Activated CD8-positive, alpha-beta T cell treated with anti-CD3 and anti-CD28 coated beads for 36 hours (primary cell): ENCODE measurements at regions of chr19 and their contacts with region 1.

Region 1: DNA sequence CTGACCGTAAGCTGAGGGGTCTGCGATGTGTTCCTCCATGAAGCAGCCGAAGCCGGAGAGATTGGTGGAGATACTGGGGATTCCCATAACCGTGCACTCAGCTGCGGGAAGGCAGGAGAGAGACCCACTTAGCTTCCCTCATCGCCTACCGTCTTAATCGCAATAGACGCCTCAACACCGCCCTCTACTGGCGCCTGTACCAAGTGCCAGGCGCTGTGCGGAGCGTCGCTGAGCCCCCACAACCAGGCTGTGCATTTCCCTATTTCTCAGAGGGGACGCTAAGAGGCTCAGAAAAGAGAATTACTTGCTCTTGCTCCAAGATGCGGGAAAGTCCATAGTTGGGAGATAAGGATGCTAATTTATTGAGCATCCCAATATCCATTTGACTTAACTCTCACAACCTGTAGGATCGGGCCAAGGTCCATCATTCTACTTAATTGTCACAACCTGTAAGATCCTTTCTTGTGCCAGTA is 5.8 kb downstream of the FTL start:
- DNase-seq: peak; percentile 93
- ATAC-seq: peak; percentile 83
- H3K4me3 Mint-ChIP-seq: no peak overlapping the region
- H3K27ac Mint-ChIP-seq: peak overlapping the region; percentile 46
- H3K4me1 Mint-ChIP-seq: peaks cover 20% of the 10 kb centered on the region
- H3K27me3 Mint-ChIP-seq: no peaks in the 10 kb centered on the region
- CTCF ChIP-seq: peak; percentile 95

Region 2: DNA sequence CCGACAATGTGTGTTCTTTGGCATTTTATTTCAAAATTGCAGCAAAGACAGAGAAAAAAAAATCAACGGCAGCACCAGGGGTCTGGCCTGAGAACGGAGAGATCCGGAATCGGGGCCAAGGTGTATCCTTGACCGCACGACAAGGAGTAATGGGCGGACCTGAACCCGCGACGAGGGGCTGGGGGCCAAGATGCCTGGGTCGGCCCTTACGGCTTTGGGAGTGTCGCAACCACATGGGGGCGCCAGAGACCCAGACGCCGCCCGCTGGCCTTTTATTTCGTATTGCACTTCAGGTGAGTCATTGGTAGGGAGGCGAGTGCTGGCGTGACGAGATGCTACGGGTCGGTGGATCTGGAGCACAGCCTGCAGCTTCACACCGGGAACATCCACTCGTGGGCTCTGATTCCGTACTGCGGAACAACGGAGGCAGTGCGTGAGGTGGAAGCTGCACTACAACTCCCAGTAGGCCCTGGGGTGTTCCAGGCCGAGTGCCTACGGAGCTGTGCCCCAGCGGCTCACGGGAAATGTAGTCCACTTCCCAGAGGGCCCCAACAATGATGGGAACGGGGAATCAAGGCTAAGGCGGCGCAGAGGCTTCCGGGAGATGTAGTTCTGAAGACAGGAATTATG is 175.8 kb before region 1 on chr19:
- CTCF ChIA-PET with region 1: interaction called, 12 read pairs
- POLR2A ChIA-PET with region 1: interaction called, 7 read pairs
- intact Hi-C with region 1: loop called (anchors 5 kb)
- DNase-seq: peak; percentile 90
- ATAC-seq: peak; percentile 99
- H3K4me3 Mint-ChIP-seq: peak overlapping the region; percentile 81
- H3K27ac Mint-ChIP-seq: peak overlapping the region; percentile 93
- H3K4me1 Mint-ChIP-seq: peaks cover 8% of the 10 kb centered on the region
- H3K27me3 Mint-ChIP-seq: no peaks in the 10 kb centered on the region
- CTCF ChIP-seq: peak; percentile 99

Region 3: GRCh38 chr19:48842789-48843162 is 128.2 kb before region 1 on chr19:
- CTCF ChIA-PET with region 1: interaction called, 32 read pairs
- POLR2A ChIA-PET with region 1: interaction called, 3 read pairs
- intact Hi-C with region 1: no loop called
- DNase-seq: peak; percentile 65
- ATAC-seq: peak; percentile 69
- H3K4me3 Mint-ChIP-seq: no peak overlapping the region
- H3K27ac Mint-ChIP-seq: no peak overlapping the region
- H3K4me1 Mint-ChIP-seq: no peaks in the 10 kb centered on the region
- H3K27me3 Mint-ChIP-seq: no peaks in the 10 kb centered on the region
- CTCF ChIP-seq: peak; percentile 85

Region 4: GRCh38 chr19:48899781-48900476 is 71.0 kb before region 1 on chr19 and contains the start of gene NUCB1:
- CTCF ChIA-PET with region 1: interaction called, 13 read pairs
- POLR2A ChIA-PET with region 1: interaction called, 8 read pairs
- intact Hi-C with region 1: no loop called
- DNase-seq: peak; percentile 100
- ATAC-seq: peak; percentile 93
- H3K4me3 Mint-ChIP-seq: peak within 1 kb of the TSS; percentile 95
- H3K27ac Mint-ChIP-seq: peak within 1 kb of the TSS; percentile 96
- H3K4me1 Mint-ChIP-seq: peaks cover 30% of the 10 kb centered on the region
- H3K27me3 Mint-ChIP-seq: peaks cover 7% of the 10 kb centered on the region
- CTCF ChIP-seq: no peak
- total RNA-seq, gene NUCB1: 102 to 114 TPM

Region 5: DNA sequence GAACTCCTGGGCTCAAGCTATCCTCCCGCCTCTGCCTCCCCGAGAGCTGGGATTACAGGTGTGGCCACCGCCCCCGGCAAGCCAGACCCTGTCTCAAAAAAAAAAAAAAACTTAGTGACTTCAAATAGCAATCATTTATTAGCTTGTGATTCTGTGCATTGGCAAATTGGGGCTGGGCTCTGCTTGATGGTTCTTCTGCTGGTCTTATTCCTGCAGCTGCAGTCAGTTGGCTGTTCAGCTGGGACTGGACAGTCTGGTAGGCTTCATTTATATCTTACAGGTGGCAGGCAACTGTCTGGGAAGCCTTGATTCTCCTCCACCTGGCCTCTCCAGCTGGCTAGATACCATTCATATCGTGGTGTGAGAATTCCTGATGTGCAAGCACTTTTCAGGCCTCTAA is 30.1 kb before region 1 on chr19:
- CTCF ChIA-PET with region 1: no interaction called
- POLR2A ChIA-PET with region 1: no interaction called
- intact Hi-C with region 1: no loop called
- DNase-seq: no peak
- ATAC-seq: no peak
- H3K4me3 Mint-ChIP-seq: no peak overlapping the region
- H3K27ac Mint-ChIP-seq: no peak overlapping the region
- H3K4me1 Mint-ChIP-seq: no peaks in the 10 kb centered on the region
- H3K27me3 Mint-ChIP-seq: no peaks in the 10 kb centered on the region
- CTCF ChIP-seq: no peak

Region 6: DNA sequence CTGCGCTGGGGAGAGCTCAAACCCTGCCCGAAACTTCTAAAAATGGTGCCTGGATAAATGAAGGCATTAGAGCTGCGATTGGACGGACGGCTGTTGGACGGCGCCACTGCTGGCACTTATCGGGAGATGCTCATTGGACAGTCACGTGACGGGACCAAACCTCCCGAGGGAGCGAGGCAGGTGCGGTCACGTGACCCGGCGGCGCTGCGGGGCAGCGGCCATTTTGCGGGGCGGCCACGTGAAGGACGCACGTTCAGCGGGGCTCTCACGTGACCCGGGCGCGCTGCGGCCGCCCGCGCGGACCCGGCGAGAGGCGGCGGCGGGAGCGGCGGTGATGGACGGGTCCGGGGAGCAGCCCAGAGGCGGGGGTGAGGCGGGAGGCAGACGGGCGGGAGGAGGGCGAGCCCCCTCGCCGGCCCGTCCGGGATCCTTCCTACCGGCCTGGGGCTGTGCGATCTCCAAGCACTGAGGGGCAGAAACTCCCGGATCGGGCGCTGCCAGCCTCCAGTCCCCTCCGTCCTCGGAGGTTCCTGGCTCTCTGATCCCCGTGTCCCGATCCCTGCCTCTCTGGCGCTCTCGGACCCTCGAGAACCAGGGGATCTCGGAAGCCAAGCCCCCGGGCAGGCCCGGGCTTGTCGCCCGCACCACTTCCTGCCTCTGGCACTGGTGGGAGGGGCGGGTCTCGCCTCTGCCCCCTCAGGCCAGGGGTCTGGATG is 16.2 kb before region 1 on chr19 and contains the start of gene BAX:
- CTCF ChIA-PET with region 1: interaction called, 11 read pairs
- POLR2A ChIA-PET with region 1: interaction called, 38 read pairs
- intact Hi-C with region 1: no loop called
- DNase-seq: peak; percentile 98
- ATAC-seq: peak; percentile 82
- H3K4me3 Mint-ChIP-seq: peak within 1 kb of the TSS; percentile 75
- H3K27ac Mint-ChIP-seq: peak within 1 kb of the TSS; percentile 92
- H3K4me1 Mint-ChIP-seq: peaks cover 31% of the 10 kb centered on the region
- H3K27me3 Mint-ChIP-seq: no peaks in the 10 kb centered on the region
- CTCF ChIP-seq: no peak
- total RNA-seq, gene BAX: 182 to 189 TPM

Region 7: GRCh38 chr19:48993175-48994034 is 22.4 kb after region 1 on chr19 and contains the starts of genes GYS1 and RUVBL2:
- CTCF ChIA-PET with region 1: interaction called, 101 read pairs
- POLR2A ChIA-PET with region 1: interaction called, 18 read pairs
- intact Hi-C with region 1: no loop called
- DNase-seq: peak; percentile 100
- ATAC-seq: peak; percentile 95
- H3K4me3 Mint-ChIP-seq: peak within 1 kb of the TSS; percentile 95
- H3K27ac Mint-ChIP-seq: peak within 1 kb of the TSS; percentile 98
- H3K4me1 Mint-ChIP-seq: peaks cover 42% of the 10 kb centered on the region
- H3K27me3 Mint-ChIP-seq: no peaks in the 10 kb centered on the region
- CTCF ChIP-seq: peak; percentile 97
- total RNA-seq, gene GYS1: 58.1 to 58.7 TPM
- total RNA-seq, gene RUVBL2: 175 to 176 TPM

Region 8: GRCh38 chr19:49073514-49074378 is 102.8 kb after region 1 on chr19:
- CTCF ChIA-PET with region 1: no interaction called
- POLR2A ChIA-PET with region 1: no interaction called
- intact Hi-C with region 1: no loop called
- DNase-seq: peak; percentile 46
- ATAC-seq: peak; percentile 42
- H3K4me3 Mint-ChIP-seq: no peak overlapping the region
- H3K27ac Mint-ChIP-seq: no peak overlapping the region
- H3K4me1 Mint-ChIP-seq: peaks cover 7% of the 10 kb centered on the region
- H3K27me3 Mint-ChIP-seq: peaks cover 54% of the 10 kb centered on the region
- CTCF ChIP-seq: no peak